ENCODE measurements at regions of chr15 and their contacts with region 1.

Region 1: GRCh38 chr15:46129145-46129544 is 494.3 kb downstream of the SQOR start:
- DNase-seq: no peak

Region 2: DNA sequence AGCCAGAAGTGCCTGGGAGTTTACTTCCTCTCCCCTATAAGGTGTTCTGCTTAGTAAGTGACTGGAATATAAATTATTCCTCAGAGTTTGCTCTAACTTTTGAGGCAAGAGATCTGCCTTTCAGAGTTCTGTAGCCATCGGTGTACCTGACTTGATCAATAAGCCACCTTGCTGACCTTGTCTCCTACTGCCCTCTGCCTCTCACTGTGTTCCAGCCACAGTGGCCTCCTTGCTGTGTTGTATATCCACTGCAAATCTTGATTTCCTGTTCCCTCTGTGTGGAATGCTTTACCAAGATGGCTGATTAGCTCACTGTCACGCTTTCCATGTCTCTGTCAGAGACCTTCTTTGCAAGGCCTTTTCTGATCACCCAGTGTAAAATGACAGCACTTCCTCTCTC is 51.9 kb before region 1 on chr15:
- intact Hi-C with region 1: loop called in 1 of 2 experiments (anchors 2 kb)
- DNase-seq: no peak

Region 3: DNA sequence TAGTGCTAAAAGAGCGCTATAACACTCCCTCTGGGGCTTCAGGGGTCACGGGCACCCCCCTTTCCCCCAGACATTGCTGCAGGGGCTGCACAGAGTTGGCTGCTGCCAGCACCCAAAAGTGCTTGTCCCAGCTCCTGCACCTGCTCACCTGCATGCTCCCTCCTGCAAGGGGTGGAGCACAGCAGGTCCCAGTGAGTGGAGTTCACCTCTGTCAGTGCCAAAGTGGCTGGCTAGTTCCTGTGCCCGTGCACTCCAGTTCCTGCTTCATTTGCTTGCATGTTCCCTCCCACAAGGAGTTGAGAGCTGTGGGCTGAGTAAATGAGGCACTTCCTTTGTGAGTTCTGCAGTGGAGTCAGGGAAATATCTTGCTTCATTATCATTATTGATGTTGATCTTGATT is 17.4 kb before region 1 on chr15:
- intact Hi-C with region 1: no loop called
- DNase-seq: no peak

Measured in posterior vena cava (tissue), 2 donors.